WTC11 (cell line): ENCODE measurements at regions of chr6 and their contacts with region 1.

Region 1: DNA sequence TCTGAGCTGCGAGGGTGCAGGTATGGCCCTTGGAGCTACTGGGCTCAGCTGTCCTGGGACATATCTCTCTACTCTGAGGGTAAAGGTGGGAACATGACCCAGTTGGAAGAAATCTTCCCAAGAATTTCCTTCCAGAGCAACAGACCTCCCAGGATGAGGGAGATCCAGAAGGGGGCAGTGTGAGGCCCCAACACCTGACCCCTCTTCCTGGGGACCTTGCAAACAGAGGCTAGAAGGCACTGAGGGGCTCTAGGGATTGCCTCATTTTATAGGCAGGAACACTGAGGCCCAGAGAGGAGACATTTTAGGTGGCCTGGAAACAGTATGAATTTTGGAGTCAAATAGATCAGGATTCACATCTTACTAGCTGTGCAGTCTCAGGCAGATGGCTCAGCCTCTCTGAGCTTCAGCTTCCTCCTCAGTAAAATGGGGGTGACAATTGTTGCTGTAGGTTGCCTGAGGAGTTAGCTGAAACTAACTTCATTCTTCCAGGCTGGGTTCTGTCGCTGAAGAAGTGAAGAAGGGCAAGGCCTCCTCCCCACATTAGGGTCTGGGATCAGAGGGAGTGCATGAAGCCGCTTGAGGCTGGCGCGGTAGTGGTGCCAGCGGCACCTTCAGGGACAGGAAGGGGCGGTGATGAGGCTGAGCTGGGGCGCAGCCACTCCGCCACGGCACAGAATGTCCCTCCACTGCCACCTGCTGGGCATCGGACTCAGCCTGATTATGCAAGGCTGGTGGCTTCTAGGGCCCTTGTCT is 11.4 kb downstream of the KCNK17 start:
- DNase-seq: peak; percentile 95
- ATAC-seq: peak; percentile 86
- H3K4me3 Mint-ChIP-seq: peak overlapping the region; percentile 21
- H3K27ac Mint-ChIP-seq: no peak overlapping the region
- H3K4me1 Mint-ChIP-seq: peaks cover 17% of the 10 kb centered on the region
- H3K27me3 Mint-ChIP-seq: no peaks in the 10 kb centered on the region; the same call in 1 of the 2 replicates
- CTCF ChIP-seq: peak; percentile 59

Region 2: GRCh38 chr6:38997128-38997761 is 305.6 kb before region 1 on chr6:
- CTCF ChIA-PET with region 1: interaction called, 14 read pairs
- POLR2A ChIA-PET with region 1: no interaction called
- DNase-seq: peak; percentile 80
- ATAC-seq: peak; percentile 92
- H3K4me3 Mint-ChIP-seq: no peak overlapping the region
- H3K27ac Mint-ChIP-seq: no peak overlapping the region
- H3K4me1 Mint-ChIP-seq: no peaks in the 10 kb centered on the region
- H3K27me3 Mint-ChIP-seq: peaks cover 8% of the 10 kb centered on the region
- CTCF ChIP-seq: peak; percentile 82

Region 3: GRCh38 chr6:39037707-39038106 is 265.1 kb before region 1 on chr6:
- CTCF ChIA-PET with region 1: no interaction called
- POLR2A ChIA-PET with region 1: no interaction called
- DNase-seq: no peak
- ATAC-seq: no peak
- H3K4me3 Mint-ChIP-seq: no peak overlapping the region
- H3K27ac Mint-ChIP-seq: no peak overlapping the region
- H3K4me1 Mint-ChIP-seq: peaks cover 16% of the 10 kb centered on the region
- H3K27me3 Mint-ChIP-seq: peaks cover 40% of the 10 kb centered on the region
- CTCF ChIP-seq: no peak

Region 4: GRCh38 chr6:39157511-39157910 is 145.3 kb before region 1 on chr6:
- CTCF ChIA-PET with region 1: interaction called, 44 read pairs
- POLR2A ChIA-PET with region 1: no interaction called
- DNase-seq: no peak
- ATAC-seq: no peak
- H3K4me3 Mint-ChIP-seq: no peak overlapping the region
- H3K27ac Mint-ChIP-seq: no peak overlapping the region
- H3K4me1 Mint-ChIP-seq: no peaks in the 10 kb centered on the region; the same call in 1 of the 2 replicates
- H3K27me3 Mint-ChIP-seq: no peaks in the 10 kb centered on the region
- CTCF ChIP-seq: no peak

Region 5: DNA sequence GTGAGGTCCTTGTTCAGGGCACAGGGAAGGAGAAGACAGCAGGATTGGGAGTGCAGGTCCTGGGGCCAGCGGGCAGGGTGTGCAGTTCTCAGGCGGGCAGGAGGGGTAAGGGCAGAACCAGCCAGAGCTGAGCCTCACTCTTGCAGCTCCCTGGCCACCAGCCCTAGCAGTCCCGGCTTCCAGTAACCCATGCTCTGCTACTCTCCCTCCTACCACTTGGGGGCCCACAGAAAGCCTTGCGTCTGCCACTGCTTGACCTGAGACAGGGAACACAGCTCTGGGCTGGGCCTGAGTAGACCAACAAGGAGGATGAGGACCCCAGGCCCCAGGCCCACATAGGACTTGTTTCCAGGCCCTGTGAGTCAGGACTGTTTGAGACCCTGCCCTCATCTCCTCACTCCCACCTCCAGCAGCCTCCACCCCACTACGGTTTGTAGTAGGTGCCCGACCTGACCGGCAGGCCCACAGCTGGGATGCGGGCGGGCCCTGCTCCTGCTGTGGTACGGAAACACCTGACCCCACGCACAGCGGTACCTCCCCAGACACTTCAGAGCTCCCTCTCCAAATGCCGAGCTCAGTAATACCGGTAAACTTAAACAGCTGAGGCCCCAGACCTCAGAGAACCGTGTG is 112.8 kb before region 1 on chr6:
- CTCF ChIA-PET with region 1: interaction called, 204 read pairs
- POLR2A ChIA-PET with region 1: interaction called, 4 read pairs
- DNase-seq: peak; percentile 77
- ATAC-seq: peak; percentile 99
- H3K4me3 Mint-ChIP-seq: no peak overlapping the region
- H3K27ac Mint-ChIP-seq: peak overlapping the region; percentile 69
- H3K4me1 Mint-ChIP-seq: peaks cover 10% of the 10 kb centered on the region
- H3K27me3 Mint-ChIP-seq: no peaks in the 10 kb centered on the region; the same call in 1 of the 2 replicates
- CTCF ChIP-seq: peak; percentile 78

Region 6: DNA sequence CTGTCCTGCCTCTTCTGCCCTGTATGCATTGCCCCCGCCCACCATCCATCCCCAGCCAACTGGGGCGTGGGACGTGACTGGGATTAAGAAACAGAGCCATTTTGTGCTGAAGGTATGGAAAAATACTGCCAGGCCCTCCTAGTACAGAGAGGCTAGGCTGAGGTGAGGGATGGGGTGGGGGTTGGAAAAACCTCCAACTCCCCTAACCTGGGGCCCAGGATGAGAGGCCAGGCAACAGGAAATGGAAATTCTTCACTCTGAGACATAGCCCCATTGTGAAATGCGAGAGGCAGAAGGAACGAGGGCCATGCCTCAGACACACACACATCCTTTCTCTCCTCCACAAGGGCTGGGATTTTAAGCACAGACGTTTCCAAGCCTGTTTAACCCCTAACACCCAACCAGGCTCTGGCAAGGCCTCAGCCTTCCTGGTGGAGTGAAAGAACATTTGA is 93.5 kb before region 1 on chr6:
- CTCF ChIA-PET with region 1: interaction called, 51 read pairs
- POLR2A ChIA-PET with region 1: no interaction called
- DNase-seq: no peak
- ATAC-seq: peak; percentile 42
- H3K4me3 Mint-ChIP-seq: peak overlapping the region; percentile 35
- H3K27ac Mint-ChIP-seq: peak overlapping the region; percentile 96
- H3K4me1 Mint-ChIP-seq: peaks cover 85% of the 10 kb centered on the region
- H3K27me3 Mint-ChIP-seq: no peaks in the 10 kb centered on the region
- CTCF ChIP-seq: no peak

Region 7: GRCh38 chr6:39239527-39240154 is 63.2 kb before region 1 on chr6:
- CTCF ChIA-PET with region 1: interaction called, 29 read pairs
- POLR2A ChIA-PET with region 1: interaction called, 5 read pairs
- DNase-seq: no peak
- ATAC-seq: peak; percentile 68
- H3K4me3 Mint-ChIP-seq: no peak overlapping the region
- H3K27ac Mint-ChIP-seq: no peak overlapping the region
- H3K4me1 Mint-ChIP-seq: peaks cover 14% of the 10 kb centered on the region; the same call in 1 of the 2 replicates
- H3K27me3 Mint-ChIP-seq: no peaks in the 10 kb centered on the region
- CTCF ChIP-seq: no peak

Region 8: GRCh38 chr6:39273406-39273821 is 29.4 kb before region 1 on chr6:
- CTCF ChIA-PET with region 1: interaction called, 17 read pairs
- POLR2A ChIA-PET with region 1: no interaction called
- DNase-seq: peak; percentile 47
- ATAC-seq: peak; percentile 86
- H3K4me3 Mint-ChIP-seq: no peak overlapping the region
- H3K27ac Mint-ChIP-seq: peak overlapping the region; percentile 35
- H3K4me1 Mint-ChIP-seq: peaks cover 43% of the 10 kb centered on the region
- H3K27me3 Mint-ChIP-seq: no peaks in the 10 kb centered on the region; the same call in 1 of the 2 replicates
- CTCF ChIP-seq: no peak

Region 9: GRCh38 chr6:39430871-39431523 is 128.2 kb after region 1 on chr6:
- CTCF ChIA-PET with region 1: no interaction called
- POLR2A ChIA-PET with region 1: no interaction called
- DNase-seq: peak; percentile 56
- ATAC-seq: peak; percentile 80
- H3K4me3 Mint-ChIP-seq: no peak overlapping the region
- H3K27ac Mint-ChIP-seq: no peak overlapping the region
- H3K4me1 Mint-ChIP-seq: peaks cover 38% of the 10 kb centered on the region
- H3K27me3 Mint-ChIP-seq: no peaks in the 10 kb centered on the region
- CTCF ChIP-seq: no peak